CD8-positive, alpha-beta T cell (primary cell): ENCODE measurements at regions of chr3 and their contacts with region 1.

Region 1: DNA sequence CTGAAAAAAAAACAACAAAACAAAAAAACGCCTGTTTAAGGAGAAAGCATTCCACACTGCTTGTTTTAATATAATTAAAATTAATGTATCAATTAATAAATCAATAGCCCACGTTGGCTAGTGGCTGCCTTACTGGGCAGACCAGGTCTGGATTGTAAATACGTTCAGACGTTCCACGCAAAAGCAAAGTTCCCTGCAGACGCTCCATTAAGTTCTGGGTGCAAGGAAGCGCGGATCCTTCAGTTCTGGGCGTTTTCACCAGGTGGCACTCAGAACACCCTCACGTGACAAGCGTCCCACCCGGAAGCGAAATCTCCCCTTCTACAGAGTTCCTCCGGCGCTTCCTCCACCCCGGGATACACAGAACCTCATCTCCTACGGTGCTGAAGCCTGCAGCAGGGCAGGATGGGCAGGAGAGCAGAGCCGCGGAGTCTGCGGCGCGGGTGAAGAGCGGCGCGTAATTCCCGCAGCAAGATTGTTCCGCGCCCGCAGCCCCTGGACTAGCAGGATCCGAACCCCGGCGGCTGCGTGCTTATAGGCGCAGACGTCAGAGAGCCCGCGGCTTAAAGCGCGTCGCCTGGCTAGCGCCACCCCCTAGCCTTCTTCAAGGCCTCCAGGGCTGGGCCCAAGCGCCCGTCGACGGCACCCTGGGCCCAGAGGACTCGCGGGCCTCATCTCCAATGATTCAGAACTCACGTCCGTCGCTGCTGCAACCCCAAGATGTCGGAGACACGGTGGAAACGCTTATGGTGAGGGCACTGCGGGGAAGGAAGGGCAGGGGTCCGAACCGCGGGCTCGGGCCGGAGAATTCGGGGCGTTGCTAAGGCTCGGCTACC is at the start of gene SLC25A38:
- DNase-seq: peak; percentile 58 to 93 (median 78)
- ATAC-seq: peak; percentile 79
- H3K4me3 ChIP-seq: peak within 1 kb of the TSS; percentile 81 to 98
- H3K4me3 Mint-ChIP-seq: peak within 1 kb of the TSS; percentile 99
- H3K27ac ChIP-seq: peak within 1 kb of the TSS; percentile 91 to 97
- H3K27ac Mint-ChIP-seq: peak within 1 kb of the TSS; percentile 98
- H3K4me1 ChIP-seq: peaks cover 43% of the 10 kb centered on the region
- H3K4me1 Mint-ChIP-seq: peaks cover 50% of the 10 kb centered on the region
- H3K27me3 ChIP-seq: no peaks in the 10 kb centered on the region
- H3K27me3 Mint-ChIP-seq: no peaks in the 10 kb centered on the region
- CTCF ChIP-seq: peak; percentile 39
- total RNA-seq, gene SLC25A38: 64.0 to 65.1 TPM

Region 2: DNA sequence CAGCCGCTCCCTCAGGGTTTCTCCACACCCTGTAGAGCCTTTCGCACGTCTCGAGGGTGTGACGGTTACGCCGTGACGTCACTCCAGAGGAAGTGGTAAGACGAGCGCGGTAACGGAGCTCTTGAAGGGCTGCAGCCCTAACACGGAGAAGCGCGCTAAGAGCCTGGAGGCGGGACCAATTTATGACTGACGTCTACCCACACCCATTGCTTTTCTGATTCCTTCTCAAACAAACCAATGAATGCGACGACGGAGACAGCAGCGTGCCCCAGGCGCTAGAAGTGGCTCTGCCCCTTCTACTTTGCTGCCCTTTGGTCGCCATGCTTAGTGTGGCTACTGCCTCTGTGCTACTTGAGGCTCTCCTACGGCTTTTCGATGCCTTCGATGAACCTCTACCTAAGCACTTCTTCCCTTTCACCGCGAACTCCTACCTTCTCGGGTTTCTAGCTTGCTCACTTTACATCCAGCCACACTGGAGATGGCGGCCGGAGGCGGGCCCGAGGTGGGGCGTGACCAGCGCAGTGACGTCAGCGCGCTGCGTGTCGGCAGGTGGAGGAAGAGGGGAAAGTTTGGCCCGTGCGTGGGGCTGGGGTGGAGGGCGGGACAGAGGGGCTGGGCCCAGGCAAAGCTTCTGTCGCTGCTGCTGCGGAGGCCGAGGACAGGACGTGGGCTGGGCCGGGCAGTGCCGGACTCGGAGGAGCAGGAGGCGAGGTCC is 1218.1 kb before region 1 on chr3 and contains the start of gene OXSR1:
- CTCF ChIA-PET with region 1: no interaction called
- POLR2A ChIA-PET with region 1: no interaction called
- intact Hi-C with region 1: loop called in 1 of 2 experiments (anchors 5 kb)
- DNase-seq: peak; percentile 91 to 100 (median 97)
- ATAC-seq: peak; percentile 89
- H3K4me3 ChIP-seq: peak within 1 kb of the TSS; percentile 76 to 84
- H3K4me3 Mint-ChIP-seq: peak within 1 kb of the TSS; percentile 91
- H3K27ac ChIP-seq: peak within 1 kb of the TSS; percentile 94 to 99
- H3K27ac Mint-ChIP-seq: peak within 1 kb of the TSS; percentile 100
- H3K4me1 ChIP-seq: peaks cover 23% of the 10 kb centered on the region
- H3K4me1 Mint-ChIP-seq: peaks cover 46% of the 10 kb centered on the region
- H3K27me3 ChIP-seq: no peaks in the 10 kb centered on the region
- H3K27me3 Mint-ChIP-seq: no peaks in the 10 kb centered on the region
- CTCF ChIP-seq: no peak
- total RNA-seq, gene OXSR1: 45.4 to 45.6 TPM

Region 3: DNA sequence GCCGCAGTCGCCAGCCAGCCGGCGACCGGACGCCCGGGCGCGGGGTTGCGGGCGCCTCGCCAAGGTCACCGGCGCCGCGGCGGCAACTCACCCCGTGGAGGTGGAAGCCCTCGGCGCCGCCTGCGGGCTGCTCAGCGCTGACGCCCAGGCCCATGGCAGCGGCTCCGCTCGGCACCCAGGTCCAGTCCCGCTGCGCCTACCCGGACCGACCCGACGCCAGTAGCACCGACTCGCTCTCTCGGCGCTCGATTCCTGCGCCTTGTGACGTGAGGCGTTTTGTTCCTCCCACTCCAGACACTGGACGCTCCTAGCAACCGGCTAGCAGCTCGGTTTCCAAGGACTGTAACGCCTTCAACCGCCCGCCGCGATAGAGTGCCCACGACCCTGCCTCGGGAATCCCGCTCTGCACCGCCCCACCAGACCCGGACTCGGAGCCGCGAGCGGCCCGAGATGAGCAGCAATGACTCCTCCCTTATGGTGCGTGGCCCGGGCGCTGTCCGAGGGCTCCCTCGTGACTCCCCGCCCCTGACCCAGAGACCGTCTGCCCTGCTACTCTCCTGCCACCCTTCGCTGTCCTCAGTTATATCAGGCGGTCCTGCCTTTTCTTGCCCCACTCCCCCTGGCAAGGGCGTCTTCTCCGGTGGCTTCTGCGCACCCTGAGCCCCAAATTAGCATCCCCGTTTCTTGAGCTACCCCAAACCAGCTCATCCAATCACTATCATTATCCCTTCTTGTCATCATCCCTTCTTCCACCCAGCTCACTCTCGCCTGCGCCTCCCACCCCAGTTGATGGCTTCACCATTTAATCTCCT is 275.7 kb before region 1 on chr3 and contains the starts of genes GORASP1 and TTC21A:
- CTCF ChIA-PET with region 1: no interaction called
- POLR2A ChIA-PET with region 1: no interaction called
- intact Hi-C with region 1: loop called in 1 of 2 experiments (anchors 5 kb)
- DNase-seq: peak; percentile 16 to 83 (median 62)
- ATAC-seq: peak; percentile 61
- H3K4me3 ChIP-seq: peak within 1 kb of the TSS; percentile 75 to 95
- H3K4me3 Mint-ChIP-seq: peak within 1 kb of the TSS; percentile 90
- H3K27ac ChIP-seq: peak within 1 kb of the TSS in 1 of 2 experiments; percentile 69
- H3K27ac Mint-ChIP-seq: peak within 1 kb of the TSS; percentile 87
- H3K4me1 ChIP-seq: peaks cover 29% of the 10 kb centered on the region
- H3K4me1 Mint-ChIP-seq: peaks cover 49% of the 10 kb centered on the region
- H3K27me3 ChIP-seq: no peaks in the 10 kb centered on the region
- H3K27me3 Mint-ChIP-seq: no peaks in the 10 kb centered on the region
- CTCF ChIP-seq: no peak
- total RNA-seq, gene GORASP1: 13.9 to 20.2 TPM
- total RNA-seq, gene TTC21A: 1.8 to 2.3 TPM

Region 4: DNA sequence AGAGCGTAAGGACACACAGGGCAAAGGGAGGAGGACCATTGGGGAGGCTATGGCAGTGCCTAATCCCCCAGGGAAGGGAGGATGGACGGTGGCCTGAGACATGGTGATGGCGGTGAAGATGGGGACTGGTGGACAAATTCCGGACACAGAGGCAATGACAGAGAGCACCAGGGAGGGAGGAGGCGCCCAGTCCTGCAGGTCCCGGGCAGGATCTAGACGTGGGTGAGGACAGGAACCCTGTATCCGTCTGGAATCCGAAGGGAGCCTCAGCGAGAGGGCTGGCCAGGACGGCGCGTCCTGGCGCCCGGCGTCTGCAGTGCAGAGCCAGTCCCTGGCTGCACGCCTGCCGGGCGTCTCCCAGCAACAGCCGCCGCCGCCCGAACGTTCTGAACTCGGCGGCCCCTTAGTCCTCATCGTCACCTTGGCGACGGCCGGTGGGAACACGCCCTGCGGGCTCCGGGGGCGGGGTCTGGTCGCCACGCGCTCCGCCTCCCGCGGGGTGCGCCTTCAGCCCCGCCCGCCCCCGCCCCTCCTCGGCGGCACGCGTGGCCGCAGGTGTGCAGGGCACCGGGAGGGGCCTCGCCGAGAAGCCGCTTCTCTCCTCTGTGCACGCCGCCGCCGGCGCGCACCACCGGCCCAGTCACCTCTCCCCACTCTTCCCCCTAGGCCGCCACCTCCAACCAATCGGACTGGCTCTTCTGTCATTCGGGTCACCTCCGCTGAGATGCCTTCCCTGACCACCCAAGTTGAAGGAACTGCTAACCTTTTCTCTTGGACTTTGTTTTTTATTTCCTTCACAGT is 202.5 kb before region 1 on chr3:
- CTCF ChIA-PET with region 1: no interaction called
- POLR2A ChIA-PET with region 1: no interaction called
- intact Hi-C with region 1: loop called (anchors 2 to 5 kb)
- DNase-seq: peak; percentile 79 to 96 (median 88)
- ATAC-seq: peak; percentile 89
- H3K4me3 ChIP-seq: peak overlapping the region; percentile 39 to 44
- H3K4me3 Mint-ChIP-seq: peak overlapping the region; percentile 76
- H3K27ac ChIP-seq: peak overlapping the region; percentile 39 to 62
- H3K27ac Mint-ChIP-seq: peak overlapping the region; percentile 85
- H3K4me1 ChIP-seq: peaks cover 27% of the 10 kb centered on the region
- H3K4me1 Mint-ChIP-seq: peaks cover 37% of the 10 kb centered on the region
- H3K27me3 ChIP-seq: no peaks in the 10 kb centered on the region
- H3K27me3 Mint-ChIP-seq: no peaks in the 10 kb centered on the region
- CTCF ChIP-seq: no peak

Region 5: DNA sequence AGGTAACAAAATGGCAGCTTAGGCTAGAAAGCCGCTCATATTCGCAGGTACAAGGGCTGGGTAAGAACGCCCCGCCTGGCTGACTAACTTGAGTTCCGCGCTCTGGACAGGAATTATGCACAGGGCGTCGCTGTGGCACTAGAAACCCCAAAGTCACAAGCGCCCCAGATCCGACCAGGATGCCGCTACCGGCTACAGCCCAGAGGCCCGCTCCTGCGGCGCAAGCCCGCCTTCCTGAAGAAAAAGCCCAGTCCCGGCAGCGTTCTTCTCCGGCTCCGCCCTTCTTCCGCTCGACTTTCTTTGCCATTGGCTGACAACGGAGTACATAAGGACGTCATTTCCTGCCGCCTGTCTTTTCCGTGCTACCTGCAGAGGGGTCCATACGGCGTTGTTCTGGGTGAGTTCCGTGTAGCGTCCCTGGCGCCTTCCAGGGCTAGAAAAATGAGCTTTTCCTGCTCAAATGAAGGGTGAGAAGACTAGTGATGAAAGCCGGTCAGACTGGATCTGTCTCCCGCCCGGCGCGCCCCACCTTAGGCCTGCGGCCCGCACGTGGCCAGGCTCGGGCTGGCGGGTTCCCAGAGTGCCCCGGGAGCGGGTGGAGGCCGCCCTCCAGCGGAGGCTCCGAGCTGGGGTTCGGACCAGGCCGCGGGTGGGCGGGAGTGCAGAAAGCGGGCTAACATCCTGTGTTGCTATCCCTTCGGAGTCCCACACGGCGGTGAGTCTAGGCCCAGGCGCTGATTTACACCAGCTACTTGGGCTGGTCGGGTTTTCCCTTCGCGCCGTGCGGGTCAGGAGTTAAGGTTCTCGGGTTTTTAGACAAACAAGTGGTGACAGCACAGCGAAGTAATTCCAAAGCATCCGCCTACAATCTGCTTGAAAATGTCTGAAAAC is 23.4 kb after region 1 on chr3 and contains the start of gene RPSA:
- CTCF ChIA-PET with region 1: interaction called, 6 read pairs
- POLR2A ChIA-PET with region 1: interaction called, 31 read pairs
- intact Hi-C with region 1: loop called (anchors 1 kb)
- DNase-seq: peak; percentile 88 to 99 (median 94)
- ATAC-seq: peak; percentile 90
- H3K4me3 ChIP-seq: peak within 1 kb of the TSS; percentile 67 to 75
- H3K4me3 Mint-ChIP-seq: peak within 1 kb of the TSS; percentile 89
- H3K27ac ChIP-seq: peak within 1 kb of the TSS; percentile 83 to 90
- H3K27ac Mint-ChIP-seq: peak within 1 kb of the TSS; percentile 96
- H3K4me1 ChIP-seq: peaks cover 40% of the 10 kb centered on the region
- H3K4me1 Mint-ChIP-seq: peaks cover 48% of the 10 kb centered on the region
- H3K27me3 ChIP-seq: no peaks in the 10 kb centered on the region
- H3K27me3 Mint-ChIP-seq: no peaks in the 10 kb centered on the region
- CTCF ChIP-seq: peak; percentile 45
- total RNA-seq, gene RPSA: 1,951 to 2,020 TPM

Region 6: GRCh38 chr3:40524568-40525285 is 1141.5 kb after region 1 on chr3 and contains the start of gene ZNF621:
- CTCF ChIA-PET with region 1: no interaction called
- POLR2A ChIA-PET with region 1: no interaction called
- intact Hi-C with region 1: loop called in 1 of 2 experiments (anchors 10 kb)
- DNase-seq: peak; percentile 69 to 90 (median 84)
- ATAC-seq: peak; percentile 97
- H3K4me3 ChIP-seq: peak within 1 kb of the TSS; percentile 76 to 97
- H3K4me3 Mint-ChIP-seq: peak within 1 kb of the TSS; percentile 94
- H3K27ac ChIP-seq: peak within 1 kb of the TSS; percentile 80 to 94
- H3K27ac Mint-ChIP-seq: peak within 1 kb of the TSS; percentile 97
- H3K4me1 ChIP-seq: peaks cover 12% of the 10 kb centered on the region
- H3K4me1 Mint-ChIP-seq: peaks cover 38% of the 10 kb centered on the region
- H3K27me3 ChIP-seq: no peaks in the 10 kb centered on the region
- H3K27me3 Mint-ChIP-seq: no peaks in the 10 kb centered on the region
- CTCF ChIP-seq: no peak
- total RNA-seq, gene ZNF621: 7.1 to 9.7 TPM